ENCODE measurements at regions of chr1 and their contacts with region 1.

Region 1: GRCh38 chr1:200488375-200489165 is 78.7 kb upstream of the ZNF281 start:
- DNase-seq: peak; percentile 63 to 68
- H3K4me3 ChIP-seq: no peak overlapping the region
- H3K27ac ChIP-seq: no peak overlapping the region
- H3K4me1 ChIP-seq: peaks cover 24% of the 10 kb centered on the region
- H3K27me3 ChIP-seq: no peaks in the 10 kb centered on the region
- CTCF ChIP-seq: peak; percentile 89

Region 2: DNA sequence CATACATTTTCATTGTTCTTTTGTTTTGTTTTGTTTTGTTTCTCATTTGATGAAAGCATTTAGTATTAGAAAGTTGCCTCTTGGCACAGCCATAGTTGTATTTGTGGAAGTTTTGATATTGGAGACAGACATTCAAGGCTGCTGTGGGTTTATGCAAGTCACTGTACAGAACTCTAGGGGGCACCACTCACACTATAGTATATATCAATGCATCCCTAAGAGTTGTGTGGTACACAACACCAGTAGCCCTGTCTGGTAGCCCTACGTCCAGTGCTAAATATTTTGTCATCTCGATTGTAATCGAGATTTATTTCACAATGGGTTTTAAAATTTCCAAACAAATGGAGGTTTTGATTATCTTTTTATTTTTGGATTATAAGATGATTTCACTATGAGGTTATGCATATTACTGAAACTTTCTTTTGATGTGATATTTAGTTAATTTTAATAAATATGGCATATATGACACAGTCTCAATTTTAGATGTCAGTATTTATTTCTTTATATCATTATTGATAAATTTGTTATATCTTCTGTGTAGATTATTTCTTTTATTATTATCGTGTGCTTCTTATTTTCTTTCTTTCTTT is 348.8 kb before region 1 on chr1:
- CTCF ChIA-PET with region 1: no interaction called
- POLR2A ChIA-PET with region 1: no interaction called
- intact Hi-C with region 1: loop called (anchors 5 kb)
- DNase-seq: no peak
- H3K4me3 ChIP-seq: no peak overlapping the region
- H3K27ac ChIP-seq: no peak overlapping the region
- H3K4me1 ChIP-seq: no peaks in the 10 kb centered on the region
- H3K27me3 ChIP-seq: no peaks in the 10 kb centered on the region
- CTCF ChIP-seq: peak; percentile 69

Region 3: DNA sequence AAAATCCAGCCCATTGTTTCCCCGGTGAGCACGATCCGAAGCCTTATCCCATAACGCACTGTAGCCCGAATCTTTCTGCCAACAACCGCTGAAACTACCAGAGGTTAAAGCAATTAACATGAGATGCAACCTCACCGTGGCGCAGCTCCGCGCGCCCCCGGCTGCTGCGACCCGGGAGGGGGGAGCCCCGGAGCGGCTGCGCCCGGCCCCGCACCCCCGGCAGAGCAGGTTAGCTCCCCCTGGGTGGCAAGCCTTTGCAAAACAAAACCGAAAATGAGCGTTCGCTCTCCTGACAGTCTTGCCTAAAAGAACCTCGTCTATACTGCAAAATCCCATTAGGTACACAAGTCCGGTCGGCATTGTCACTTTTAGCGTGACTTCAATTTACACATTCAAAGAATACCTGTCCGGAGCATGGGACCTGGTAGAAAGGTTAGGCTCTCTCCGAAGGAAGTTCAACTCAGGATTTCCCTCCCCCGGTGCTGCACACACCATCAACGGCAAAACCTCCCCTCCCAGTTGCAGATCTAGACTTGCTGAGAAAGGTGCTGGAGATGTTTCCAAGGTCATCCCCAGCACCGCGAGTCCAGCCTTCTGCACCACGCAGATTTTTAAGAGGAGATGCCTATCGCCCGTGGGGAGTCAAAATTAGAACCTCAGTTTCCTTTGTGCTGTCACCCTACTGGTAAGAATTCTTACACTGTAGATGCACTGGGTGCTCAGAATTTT is 186.2 kb before region 1 on chr1:
- CTCF ChIA-PET with region 1: interaction called, 15 read pairs
- POLR2A ChIA-PET with region 1: no interaction called
- intact Hi-C with region 1: loop called (anchors 10 kb)
- DNase-seq: peak in 1 of 2 experiments; percentile 36
- H3K4me3 ChIP-seq: peak overlapping the region; percentile 66
- H3K27ac ChIP-seq: no peak overlapping the region
- H3K4me1 ChIP-seq: no peaks in the 10 kb centered on the region
- H3K27me3 ChIP-seq: no peaks in the 10 kb centered on the region
- CTCF ChIP-seq: no peak

Region 4: DNA sequence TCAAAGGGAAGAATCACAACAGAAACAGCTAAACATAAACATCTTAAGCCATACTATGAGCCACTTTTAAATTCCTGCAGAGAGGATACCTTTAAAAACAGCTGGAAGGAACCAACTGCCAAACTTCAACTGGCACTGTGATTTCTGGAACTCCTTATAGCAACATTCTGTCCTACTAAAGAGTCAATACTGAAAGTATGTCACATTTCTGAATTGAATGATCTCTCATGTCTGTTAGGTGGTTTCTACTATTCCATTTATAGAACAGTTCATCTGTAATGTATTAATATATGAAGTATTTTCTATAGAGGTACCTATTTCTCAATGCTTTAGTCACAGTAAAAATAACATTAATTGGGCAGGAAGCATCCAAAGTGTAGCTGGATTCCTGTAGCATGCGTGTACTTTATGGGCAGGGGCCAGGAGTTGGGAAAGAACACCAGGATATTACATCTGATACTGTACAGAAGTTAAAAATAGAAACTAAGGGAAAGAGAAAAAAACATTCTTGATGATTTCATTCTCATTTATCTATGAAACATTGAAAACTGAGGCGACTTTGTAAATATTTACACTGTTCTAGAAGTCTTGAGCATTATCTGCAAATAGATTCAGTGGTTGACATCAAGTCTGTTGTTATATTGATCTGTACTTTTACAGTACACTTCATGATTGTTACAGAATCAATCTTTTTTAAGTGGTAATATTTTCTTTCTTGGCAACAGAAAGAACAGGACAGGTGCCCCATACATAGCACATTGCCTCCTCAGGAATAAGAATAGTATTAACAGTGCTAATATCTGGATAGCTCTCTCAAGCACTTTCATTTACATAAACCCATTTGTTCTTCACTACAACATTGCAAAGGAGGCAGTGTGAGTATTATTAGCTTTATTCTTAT is 72.6 kb before region 1 on chr1:
- CTCF ChIA-PET with region 1: interaction called, 3 read pairs
- POLR2A ChIA-PET with region 1: no interaction called
- intact Hi-C with region 1: loop called (anchors 1 kb)
- DNase-seq: peak; percentile 67 to 96
- H3K4me3 ChIP-seq: peak overlapping the region; percentile 40; the same call in 1 of the 2 replicates
- H3K27ac ChIP-seq: peak overlapping the region; percentile 100
- H3K4me1 ChIP-seq: peaks cover 48% of the 10 kb centered on the region
- H3K27me3 ChIP-seq: no peaks in the 10 kb centered on the region
- CTCF ChIP-seq: no peak

Region 5: DNA sequence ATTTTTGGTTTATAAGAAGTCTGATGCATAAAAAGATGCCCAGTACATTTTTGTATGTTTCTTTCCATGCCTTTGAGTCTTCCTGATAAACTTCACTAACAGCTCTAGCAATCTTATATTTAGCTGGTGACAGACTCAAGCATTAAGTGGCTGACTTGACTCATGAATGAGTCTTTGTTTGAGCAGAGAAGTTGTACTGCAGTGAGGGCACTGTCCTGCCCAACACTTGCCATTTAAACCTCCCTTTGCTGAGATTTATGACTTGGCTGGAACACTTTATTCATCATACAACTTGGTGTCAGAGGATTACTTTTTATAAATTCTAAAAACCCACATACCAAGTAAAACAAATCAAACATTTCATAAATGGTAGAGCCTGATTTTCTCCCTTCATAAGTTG is 235.5 kb after region 1 on chr1:
- CTCF ChIA-PET with region 1: no interaction called
- POLR2A ChIA-PET with region 1: no interaction called
- intact Hi-C with region 1: no loop called
- DNase-seq: no peak
- H3K4me3 ChIP-seq: no peak overlapping the region
- H3K27ac ChIP-seq: no peak overlapping the region
- H3K4me1 ChIP-seq: no peaks in the 10 kb centered on the region
- H3K27me3 ChIP-seq: no peaks in the 10 kb centered on the region
- CTCF ChIP-seq: no peak

Region 6: GRCh38 chr1:201376464-201377374 is 888.1 kb after region 1 on chr1:
- CTCF ChIA-PET with region 1: no interaction called
- POLR2A ChIA-PET with region 1: no interaction called
- intact Hi-C with region 1: no loop called
- DNase-seq: peak in 1 of 2 experiments; percentile 63
- H3K4me3 ChIP-seq: no peak overlapping the region
- H3K27ac ChIP-seq: no peak overlapping the region
- H3K4me1 ChIP-seq: peaks cover 7% of the 10 kb centered on the region; the same call in 1 of the 2 replicates
- H3K27me3 ChIP-seq: peaks cover 42% of the 10 kb centered on the region
- CTCF ChIP-seq: peak; percentile 83